ENCODE measurements at regions of chr12 and their contacts with region 1.

Region 1: GRCh38 chr12:28460420-28461130 is 270.3 kb downstream of the CCDC91 start:
- DNase-seq: no peak
- H3K4me3 ChIP-seq: no peak overlapping the region
- H3K27ac ChIP-seq: no peak overlapping the region
- H3K4me1 ChIP-seq: no peaks in the 10 kb centered on the region
- H3K27me3 ChIP-seq: no peaks in the 10 kb centered on the region
- CTCF ChIP-seq: no peak

Region 2: GRCh38 chr12:29050503-29050902 is 589.9 kb after region 1 on chr12:
- CTCF ChIA-PET with region 1: no interaction called
- POLR2A ChIA-PET with region 1: interaction called, 10 read pairs
- intact Hi-C with region 1: no loop called
- DNase-seq: no peak
- H3K4me3 ChIP-seq: no peak overlapping the region
- H3K27ac ChIP-seq: no peak overlapping the region
- H3K4me1 ChIP-seq: no peaks in the 10 kb centered on the region
- H3K27me3 ChIP-seq: no peaks in the 10 kb centered on the region
- CTCF ChIP-seq: no peak